ENCODE measurements at regions of chr22 and their contacts with region 1.

Region 1: GRCh38 chr22:31080848-31081649 is at the start of gene SMTN:
- DNase-seq: peak; percentile 92
- ATAC-seq: peak; percentile 67
- H3K4me3 Mint-ChIP-seq: peak within 1 kb of the TSS; percentile 82
- H3K27ac Mint-ChIP-seq: peak within 1 kb of the TSS; percentile 63
- H3K4me1 Mint-ChIP-seq: peaks cover 30% of the 10 kb centered on the region
- H3K27me3 Mint-ChIP-seq: no peaks in the 10 kb centered on the region
- total RNA-seq, gene SMTN: 40.1 to 45.8 TPM

Region 2: GRCh38 chr22:30634471-30635233 is 446.4 kb before region 1 on chr22:
- CTCF ChIA-PET with region 1: no interaction called
- POLR2A ChIA-PET with region 1: interaction called, 3 read pairs
- intact Hi-C with region 1: loop called (anchors 2 kb)
- DNase-seq: peak; percentile 95
- ATAC-seq: peak; percentile 77
- H3K4me3 Mint-ChIP-seq: peak overlapping the region; percentile 75
- H3K27ac Mint-ChIP-seq: peak overlapping the region; percentile 84
- H3K4me1 Mint-ChIP-seq: peaks cover 22% of the 10 kb centered on the region
- H3K27me3 Mint-ChIP-seq: no peaks in the 10 kb centered on the region

Region 3: GRCh38 chr22:30947816-30948454 is 133.1 kb before region 1 on chr22:
- CTCF ChIA-PET with region 1: interaction called, 22 read pairs
- POLR2A ChIA-PET with region 1: no interaction called
- intact Hi-C with region 1: loop called (anchors 1 kb)
- DNase-seq: no peak
- ATAC-seq: peak; percentile 65
- H3K4me3 Mint-ChIP-seq: no peak overlapping the region
- H3K27ac Mint-ChIP-seq: no peak overlapping the region
- H3K4me1 Mint-ChIP-seq: peaks cover 47% of the 10 kb centered on the region
- H3K27me3 Mint-ChIP-seq: no peaks in the 10 kb centered on the region

Region 4: GRCh38 chr22:31107178-31107893 is 26.3 kb after region 1 on chr22 and contains the start of gene SELENOM:
- CTCF ChIA-PET with region 1: interaction called, 22 read pairs
- POLR2A ChIA-PET with region 1: interaction called, 4 read pairs
- intact Hi-C with region 1: loop called (anchors 1 kb)
- DNase-seq: peak; percentile 94
- ATAC-seq: peak; percentile 96
- H3K4me3 Mint-ChIP-seq: peak within 1 kb of the TSS; percentile 74
- H3K27ac Mint-ChIP-seq: peak within 1 kb of the TSS; percentile 60
- H3K4me1 Mint-ChIP-seq: peaks cover 19% of the 10 kb centered on the region
- H3K27me3 Mint-ChIP-seq: no peaks in the 10 kb centered on the region
- total RNA-seq, gene SELENOM: 8.8 to 12.2 TPM

Region 5: DNA sequence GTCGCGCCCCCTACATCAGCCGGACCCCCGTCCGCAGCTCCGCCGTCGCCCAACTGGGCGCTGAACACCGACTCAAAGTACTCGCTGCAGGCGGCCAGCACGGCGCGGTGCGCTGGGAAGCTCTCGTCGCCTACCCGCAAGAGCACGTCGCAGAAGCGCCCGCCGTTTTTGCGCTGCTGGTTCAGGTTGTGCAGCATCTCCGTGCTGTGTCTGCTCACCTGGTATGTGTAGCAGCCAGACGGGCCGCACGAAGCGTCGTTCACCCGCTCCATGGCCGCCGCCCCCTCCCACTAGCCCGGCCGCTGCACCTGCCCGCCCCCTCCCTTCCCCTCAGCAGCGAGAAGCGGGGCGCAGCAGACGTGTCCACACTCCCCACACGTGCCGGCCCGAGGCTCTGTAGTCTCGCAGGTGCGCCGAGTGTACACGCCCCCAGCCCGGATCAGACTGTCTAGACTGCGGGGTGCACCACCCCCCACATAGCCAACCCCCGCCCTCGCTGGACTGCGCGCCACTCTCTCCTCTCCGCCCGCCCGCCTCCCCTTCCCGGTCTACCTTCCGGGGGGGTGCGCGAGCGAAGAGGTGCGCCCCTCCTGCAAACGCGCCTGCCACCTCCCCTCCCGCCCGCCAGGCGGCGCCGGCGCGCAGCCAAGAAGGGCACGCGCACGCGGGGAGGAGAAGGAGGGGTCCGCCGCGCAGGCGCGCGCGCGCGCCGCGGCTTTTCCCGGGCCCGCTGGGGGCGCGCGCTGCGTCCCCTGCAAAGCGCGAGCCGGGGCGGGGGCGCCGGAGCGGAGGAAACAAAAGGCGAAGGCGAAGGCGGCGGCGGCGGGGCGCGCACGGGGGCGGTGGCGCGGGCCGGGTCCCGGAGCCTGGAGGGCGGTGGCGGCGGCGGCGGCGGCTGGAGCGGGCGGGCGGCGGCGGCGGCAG is 264.5 kb after region 1 on chr22:
- CTCF ChIA-PET with region 1: no interaction called
- POLR2A ChIA-PET with region 1: interaction called, 4 read pairs
- intact Hi-C with region 1: loop called in 1 of 2 experiments (anchors 1 kb)
- DNase-seq: peak; percentile 93
- ATAC-seq: peak; percentile 59
- H3K4me3 Mint-ChIP-seq: peak overlapping the region; percentile 90
- H3K27ac Mint-ChIP-seq: peak overlapping the region; percentile 92
- H3K4me1 Mint-ChIP-seq: peaks cover 44% of the 10 kb centered on the region
- H3K27me3 Mint-ChIP-seq: no peaks in the 10 kb centered on the region

Measured in activated CD4-positive, alpha-beta T cell treated with anti-CD3 and anti-CD28 coated beads for 36 hours (primary cell).